ENCODE measurements at regions of chr9 and their contacts with region 1.

Region 1: DNA sequence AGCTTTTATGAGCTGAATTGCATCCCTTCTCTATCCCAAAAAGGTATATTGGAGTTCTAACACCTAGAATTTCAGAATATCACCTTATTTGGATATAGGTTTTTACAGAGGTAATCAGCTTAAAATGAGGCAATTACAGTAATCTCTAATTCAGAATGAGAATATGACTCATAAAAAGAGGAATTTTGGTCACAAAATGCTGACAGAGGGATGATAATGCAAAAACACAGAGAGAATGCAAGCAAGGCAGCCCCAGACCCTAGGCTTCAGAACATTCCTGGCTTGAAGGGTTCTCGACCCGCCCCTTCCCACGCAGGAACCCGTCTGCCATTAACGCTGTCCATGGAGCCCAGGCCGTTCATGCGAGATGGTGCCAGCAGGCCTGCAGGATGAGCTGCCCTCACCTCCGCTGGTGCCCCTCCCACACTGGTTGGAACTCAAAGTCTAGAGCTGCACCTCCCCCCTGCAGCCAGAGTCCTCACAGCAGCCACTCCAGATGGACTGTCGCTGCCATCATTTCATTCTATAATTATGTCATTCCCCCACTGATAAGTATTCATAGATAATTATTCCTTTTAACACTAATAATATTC is 1173.4 kb upstream of the ACO1 start:
- DNase-seq: no peak
- ATAC-seq: no peak
- H3K4me3 ChIP-seq: no peak overlapping the region
- H3K27ac ChIP-seq: no peak overlapping the region
- H3K4me1 ChIP-seq: no peaks in the 10 kb centered on the region
- H3K27me3 ChIP-seq: no peaks in the 10 kb centered on the region
- CTCF ChIP-seq: no peak
- POLR2A ChIP-seq: no peak

Region 2: DNA sequence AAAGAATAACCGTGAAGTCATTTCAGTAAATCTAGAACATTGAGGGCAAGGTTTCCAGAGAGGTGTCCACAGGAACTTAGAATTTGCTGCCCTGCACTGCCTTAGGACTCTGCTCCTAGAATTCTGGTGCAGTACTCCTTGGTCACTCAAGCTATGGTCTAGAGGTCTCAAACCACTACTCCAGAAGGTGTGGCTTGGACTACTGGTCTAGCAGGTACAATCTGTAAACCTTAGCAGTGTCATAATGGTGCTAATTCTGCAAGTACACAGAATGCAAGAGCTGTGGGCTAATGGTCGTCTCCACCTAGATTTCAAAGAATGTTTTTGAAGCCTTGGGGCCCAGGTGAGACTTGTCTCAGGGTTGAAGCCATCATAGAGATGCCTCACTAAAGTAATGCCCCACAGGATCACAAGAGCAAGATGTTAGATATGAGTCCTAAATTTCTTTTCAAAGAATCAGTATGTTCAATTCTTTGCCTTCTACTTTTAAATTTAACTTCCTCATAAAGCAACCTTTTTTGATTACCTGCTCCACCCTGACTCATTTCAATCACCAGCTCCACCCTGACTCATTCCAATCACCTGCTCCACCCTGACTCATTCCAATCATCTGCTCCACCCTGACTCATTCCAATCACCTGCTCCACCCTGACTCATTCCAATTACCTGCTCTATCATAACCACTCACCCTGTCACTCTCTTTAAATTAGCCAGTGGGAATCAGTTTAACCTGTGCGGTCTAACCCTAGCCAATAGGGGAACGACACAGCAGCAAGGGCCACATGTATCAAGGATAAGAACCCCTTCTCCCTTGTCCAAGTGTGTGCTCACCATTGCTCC is 61.6 kb after region 1 on chr9:
- in situ Hi-C with region 1: loop called in 1 of 4 experiments (anchors 10 kb)
- intact Hi-C with region 1: no loop called
- DNase-seq: no peak
- ATAC-seq: no peak
- H3K4me3 ChIP-seq: no peak overlapping the region
- H3K27ac ChIP-seq: no peak overlapping the region
- H3K4me1 ChIP-seq: no peaks in the 10 kb centered on the region
- H3K27me3 ChIP-seq: no peaks in the 10 kb centered on the region
- CTCF ChIP-seq: no peak
- POLR2A ChIP-seq: no peak